Upper lobe of right lung (tissue), 1 donor: ENCODE measurements at regions of chr17 and their contacts with region 1.

Region 1: GRCh38 chr17:40559954-40560591 is 5.2 kb downstream of the CCR7 start:
- DNase-seq: peak; percentile 93
- ATAC-seq: peak; percentile 97
- H3K4me3 ChIP-seq: peak overlapping the region; percentile 12
- H3K27ac ChIP-seq: peak overlapping the region; percentile 66
- H3K4me1 ChIP-seq: peaks cover 30% of the 10 kb centered on the region
- H3K27me3 ChIP-seq: no peaks in the 10 kb centered on the region
- CTCF ChIP-seq: peak; percentile 99

Region 2: GRCh38 chr17:40443583-40444327 is 116.3 kb before region 1 on chr17:
- intact Hi-C with region 1: loop called (anchors 5 kb)
- DNase-seq: peak; percentile 93
- ATAC-seq: peak; percentile 76
- H3K4me3 ChIP-seq: peak overlapping the region; percentile 81
- H3K27ac ChIP-seq: peak overlapping the region; percentile 90
- H3K4me1 ChIP-seq: peaks cover 36% of the 10 kb centered on the region
- H3K27me3 ChIP-seq: no peaks in the 10 kb centered on the region
- CTCF ChIP-seq: peak; percentile 42